PC-3 (cell line): ENCODE measurements at regions of chr7 and their contacts with region 1.

Region 1: DNA sequence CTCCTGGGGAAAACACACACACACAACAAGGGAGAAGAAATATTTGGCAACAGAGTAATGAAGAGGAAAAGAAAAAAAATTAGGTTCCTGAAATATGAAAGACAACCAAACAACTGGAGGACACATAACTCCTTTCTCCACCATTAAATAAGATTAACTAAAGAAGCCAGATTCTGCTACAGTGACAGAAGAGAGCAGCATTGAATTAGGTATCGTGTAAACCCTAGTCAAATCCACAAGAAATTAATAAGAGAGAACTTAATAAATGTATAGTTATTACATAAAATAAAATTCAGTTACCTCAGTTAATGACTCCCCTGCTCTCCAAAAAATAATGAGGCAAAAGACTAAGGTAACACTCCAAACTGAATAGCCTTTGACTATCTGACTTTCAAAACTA is 306.7 kb downstream of the CRPPA start:
- DNase-seq: peak; percentile 51
- ATAC-seq: peak; percentile 59
- H3K4me3 ChIP-seq: no peak overlapping the region
- H3K27ac ChIP-seq: no peak overlapping the region
- H3K4me1 ChIP-seq: no peaks in the 10 kb centered on the region
- H3K27me3 ChIP-seq: no peaks in the 10 kb centered on the region
- CTCF ChIP-seq: peak; percentile 71

Region 2: DNA sequence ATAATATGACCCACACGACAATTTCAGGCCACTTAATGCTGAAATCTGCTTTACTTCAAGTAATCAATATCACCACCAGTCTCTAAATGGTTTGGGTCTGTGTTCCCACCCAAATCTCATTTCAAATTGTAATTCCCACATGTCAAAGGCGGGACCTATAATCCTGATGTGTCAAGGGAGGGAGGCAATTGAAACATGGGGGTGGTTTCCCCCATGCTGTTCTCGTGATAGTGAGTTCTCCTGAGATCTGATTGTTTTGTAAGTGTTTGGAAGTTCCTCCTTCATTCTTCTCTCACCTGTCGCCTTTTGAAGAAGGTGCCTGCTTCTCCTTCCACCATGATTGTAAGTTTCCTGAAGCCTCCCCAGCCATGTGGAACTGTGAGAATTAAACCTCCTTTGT is 128.3 kb after region 1 on chr7:
- CTCF ChIA-PET with region 1: no interaction called
- POLR2A ChIA-PET with region 1: no interaction called
- intact Hi-C with region 1: no loop called
- DNase-seq: no peak
- ATAC-seq: no peak
- H3K4me3 ChIP-seq: no peak overlapping the region
- H3K27ac ChIP-seq: no peak overlapping the region
- H3K4me1 ChIP-seq: 0 out of 2 replicates have a peak, but pooled peaks cover 4% of the 10 kb centered on the region
- H3K27me3 ChIP-seq: no peaks in the 10 kb centered on the region
- CTCF ChIP-seq: no peak

Region 3: DNA sequence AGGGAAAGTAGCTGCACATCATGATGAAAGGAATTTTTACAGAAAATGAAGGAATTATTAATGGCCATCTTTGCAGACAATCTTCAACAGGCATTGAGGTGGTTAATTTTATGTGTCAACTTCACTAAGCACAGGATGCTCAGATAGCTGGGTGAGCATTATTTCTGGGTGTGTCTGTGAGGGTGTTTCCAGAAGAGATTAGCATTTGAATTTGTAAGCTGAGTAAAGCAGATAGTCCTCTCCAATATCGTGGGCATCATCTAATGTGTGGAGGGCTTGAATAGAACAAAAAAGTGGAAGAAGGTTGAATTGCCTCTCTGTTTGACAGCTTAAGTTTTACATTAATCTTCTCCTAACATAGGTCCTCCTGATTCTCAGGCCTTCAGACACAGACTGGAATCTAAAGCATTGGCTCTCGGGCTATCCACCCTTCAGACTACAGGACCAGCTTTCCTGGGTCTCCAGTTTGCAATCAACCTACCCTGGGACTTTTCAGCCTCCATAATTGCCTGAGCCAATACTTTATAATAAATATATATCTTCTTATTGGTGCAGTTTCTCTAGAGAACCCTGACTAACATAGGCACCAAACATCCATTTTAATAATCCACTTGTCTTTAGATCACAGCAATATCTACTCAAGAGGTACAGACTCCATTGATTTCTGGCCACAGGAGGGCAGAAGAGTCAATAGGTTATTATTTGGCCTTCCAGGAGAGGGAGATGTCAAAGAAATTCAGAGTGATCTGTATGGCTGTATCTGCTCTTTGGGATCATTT is 317.2 kb after region 1 on chr7:
- CTCF ChIA-PET with region 1: no interaction called
- POLR2A ChIA-PET with region 1: no interaction called
- intact Hi-C with region 1: loop called (anchors 1 kb)
- DNase-seq: peak; percentile 64
- ATAC-seq: peak; percentile 64
- H3K4me3 ChIP-seq: no peak overlapping the region
- H3K27ac ChIP-seq: no peak overlapping the region
- H3K4me1 ChIP-seq: peaks cover 26% of the 10 kb centered on the region
- H3K27me3 ChIP-seq: no peaks in the 10 kb centered on the region
- CTCF ChIP-seq: peak; percentile 77